ENCODE measurements at regions of chr17 and their contacts with region 1.

Region 1: DNA sequence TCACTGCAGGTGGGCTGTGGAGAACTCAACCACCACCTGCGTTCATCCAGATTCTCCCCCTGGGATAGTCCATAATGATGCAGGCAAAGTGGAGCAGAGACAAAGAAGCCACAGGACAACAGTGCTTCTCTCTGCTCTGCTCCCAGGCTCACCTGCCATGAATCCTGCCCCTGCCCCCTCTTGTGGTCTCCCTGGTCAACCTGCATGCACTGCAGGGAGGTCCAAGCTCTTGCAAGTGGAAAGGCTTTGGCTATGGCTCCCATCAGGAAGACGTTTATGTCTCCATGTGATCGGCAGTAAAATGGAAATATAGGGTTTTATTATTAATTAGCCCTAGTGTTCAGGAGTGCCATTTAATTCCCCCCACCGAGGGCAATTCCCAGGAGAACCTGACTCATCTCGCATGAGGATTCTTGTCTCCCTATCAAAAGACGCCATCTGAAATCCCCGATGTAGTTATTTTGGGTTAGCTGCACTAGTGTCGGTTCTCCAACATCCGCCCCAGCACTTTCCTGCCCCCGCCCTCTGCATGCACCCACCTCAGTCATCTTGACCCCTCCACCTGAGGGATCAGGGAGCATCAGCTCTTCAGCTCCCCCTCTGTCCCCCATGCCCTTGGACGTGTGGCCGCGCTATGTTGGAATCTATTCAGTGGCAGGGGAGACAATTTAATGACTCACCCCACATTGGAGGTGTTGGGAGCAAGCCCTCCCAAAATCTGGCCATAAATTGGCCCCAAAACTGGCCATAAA is 91.8 kb downstream of the KCNJ12 start:
- DNase-seq: no peak
- ATAC-seq: no peak
- H3K4me3 Mint-ChIP-seq: no peak overlapping the region
- H3K27ac Mint-ChIP-seq: no peak overlapping the region
- H3K4me1 Mint-ChIP-seq: peaks cover 8% of the 10 kb centered on the region
- H3K27me3 Mint-ChIP-seq: peaks cover 8% of the 10 kb centered on the region
- CTCF ChIP-seq: no peak

Region 2: DNA sequence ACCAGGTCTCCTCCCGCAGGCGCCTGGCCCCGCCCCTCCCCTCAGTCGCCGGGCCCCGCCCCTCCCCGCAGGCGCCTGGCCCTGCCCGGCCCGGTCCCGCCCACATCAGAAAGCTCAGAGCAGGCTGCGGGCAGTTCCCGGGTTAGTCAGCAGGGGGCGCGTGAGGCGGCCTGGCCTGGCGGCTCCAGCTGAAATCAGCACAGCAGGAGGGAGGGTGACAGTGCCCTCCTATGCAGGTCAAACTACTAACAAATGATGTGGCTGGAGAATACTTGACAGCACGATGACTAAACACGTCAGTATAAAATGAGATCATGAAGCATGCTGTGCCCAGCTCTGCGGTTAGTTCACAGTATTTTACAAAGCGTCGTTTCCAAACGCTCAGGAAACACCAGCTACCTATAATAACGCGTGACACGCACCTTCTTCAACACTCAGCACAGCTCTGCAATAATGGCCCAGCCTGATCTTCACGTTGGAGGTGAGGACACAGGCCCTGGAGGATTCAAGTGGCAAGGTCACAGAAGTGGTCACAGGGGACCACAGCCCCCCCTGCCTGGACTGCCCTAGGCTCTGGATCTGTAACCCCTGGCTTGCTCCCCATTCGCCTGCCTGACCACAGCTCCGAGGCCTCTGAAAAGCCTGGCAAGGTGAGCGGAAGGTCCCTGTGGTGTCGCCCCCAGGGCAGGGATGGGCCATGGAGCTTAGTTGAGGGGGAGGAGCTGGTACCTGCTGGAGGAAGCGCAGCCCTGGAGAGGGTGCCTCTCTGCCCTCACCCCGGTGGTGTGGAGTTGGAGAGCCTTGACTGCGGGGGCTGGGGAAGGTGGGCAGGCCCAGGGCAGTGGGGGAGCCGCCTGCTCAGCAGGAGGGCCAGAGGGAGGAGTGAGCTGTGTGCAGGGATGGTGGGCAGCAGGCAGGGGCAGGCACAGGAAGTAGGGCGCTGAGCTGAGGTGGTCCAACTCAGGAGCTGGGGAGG is 10.6 kb before region 1 on chr17:
- CTCF ChIA-PET with region 1: interaction called, 13 read pairs
- POLR2A ChIA-PET with region 1: no interaction called
- intact Hi-C with region 1: no loop called
- DNase-seq: peak; percentile 94
- ATAC-seq: peak; percentile 96
- H3K4me3 Mint-ChIP-seq: peak overlapping the region; percentile 38
- H3K27ac Mint-ChIP-seq: peak overlapping the region; percentile 80
- H3K4me1 Mint-ChIP-seq: peaks cover 27% of the 10 kb centered on the region
- H3K27me3 Mint-ChIP-seq: peaks cover 12% of the 10 kb centered on the region
- CTCF ChIP-seq: peak; percentile 87